Endothelial cell of umbilical vein (primary cell): ENCODE measurements at regions of chr18 and their contacts with region 1.

Region 1: GRCh38 chr18:31722369-31722957 is 38.1 kb upstream of the B4GALT6 start:
- DNase-seq: peak; percentile 80
- H3K4me3 ChIP-seq: no peak overlapping the region
- H3K27ac ChIP-seq: no peak overlapping the region
- H3K4me1 ChIP-seq: peaks cover 2% of the 10 kb centered on the region
- H3K27me3 ChIP-seq: peaks cover 18 to 19% of the 10 kb centered on the region in 2 experiments
- CTCF ChIP-seq: peak; percentile 84 to 87
- POLR2A ChIP-seq: no peak

Region 2: GRCh38 chr18:31610286-31611205 is 111.9 kb before region 1 on chr18:
- CTCF ChIA-PET with region 1: interaction called, 46 read pairs
- POLR2A ChIA-PET with region 1: no interaction called
- dilution Hi-C with region 1: no loop called
- intact Hi-C with region 1: loop called (anchors 1 kb)
- DNase-seq: peak; percentile 26
- H3K4me3 ChIP-seq: no peak overlapping the region
- H3K27ac ChIP-seq: no peak overlapping the region
- H3K4me1 ChIP-seq: no peaks in the 10 kb centered on the region
- H3K27me3 ChIP-seq: peaks cover 7 to 9% of the 10 kb centered on the region in 2 experiments
- CTCF ChIP-seq: peak; percentile 5 to 30
- POLR2A ChIP-seq: no peak

Region 3: DNA sequence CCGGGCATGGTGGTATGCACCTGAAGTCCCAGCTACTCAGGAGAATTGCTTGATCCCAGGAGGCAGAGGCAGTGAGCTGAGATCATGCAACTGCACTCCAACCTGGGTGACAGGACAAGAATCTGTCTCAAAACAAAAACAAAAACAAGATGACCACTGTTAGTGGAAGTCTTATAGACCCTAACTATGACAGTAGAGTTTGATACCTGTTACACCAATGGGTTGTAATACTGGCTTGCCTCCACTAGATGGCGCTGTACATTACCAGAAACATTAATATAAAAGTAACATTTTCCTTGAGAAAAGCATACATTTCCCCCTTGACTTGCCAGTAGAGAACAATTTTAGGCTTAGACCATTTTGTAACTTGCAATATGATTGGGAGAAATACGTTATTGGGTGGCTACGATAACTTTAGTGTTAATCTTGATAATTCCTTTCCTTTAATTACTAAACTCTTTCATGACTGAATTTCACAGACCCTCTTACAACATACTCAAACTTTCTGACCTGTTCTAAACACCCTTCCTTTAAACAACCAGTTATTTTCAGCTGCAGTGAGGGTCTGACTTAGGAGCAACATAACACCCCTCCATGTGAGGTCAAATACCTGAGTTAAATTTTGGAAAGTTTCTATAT is 18.8 kb after region 1 on chr18:
- CTCF ChIA-PET with region 1: interaction called, 11 read pairs
- POLR2A ChIA-PET with region 1: no interaction called
- dilution Hi-C with region 1: no loop called
- intact Hi-C with region 1: no loop called
- DNase-seq: peak; percentile 44
- H3K4me3 ChIP-seq: no peak overlapping the region
- H3K27ac ChIP-seq: no peak overlapping the region
- H3K4me1 ChIP-seq: no peaks in the 10 kb centered on the region
- H3K27me3 ChIP-seq: no peaks in the 10 kb centered on the region
- CTCF ChIP-seq: peak; percentile 60 to 66
- POLR2A ChIP-seq: no peak

Region 4: DNA sequence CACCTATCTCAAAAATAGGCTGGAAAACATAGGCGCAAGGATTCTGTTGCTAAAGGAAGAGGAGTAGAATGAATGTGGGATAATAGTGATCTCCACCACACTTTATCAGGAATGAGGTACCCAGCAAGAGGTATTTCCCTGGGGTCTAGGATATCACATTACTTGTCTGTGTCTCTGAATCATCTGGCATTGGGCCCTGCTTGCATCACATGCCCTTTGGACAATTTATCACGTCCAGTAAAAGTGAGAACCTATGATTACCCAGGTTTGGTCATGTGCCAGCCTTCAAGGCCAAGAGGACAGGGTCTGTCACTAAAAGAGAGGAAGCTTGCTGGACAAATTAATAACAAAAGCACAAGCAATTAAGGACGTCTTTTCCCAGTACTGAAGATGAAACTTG is 231.9 kb after region 1 on chr18:
- CTCF ChIA-PET with region 1: no interaction called
- POLR2A ChIA-PET with region 1: no interaction called
- dilution Hi-C with region 1: no loop called
- intact Hi-C with region 1: loop called (anchors 5 kb)
- DNase-seq: no peak
- H3K4me3 ChIP-seq: no peak overlapping the region
- H3K27ac ChIP-seq: no peak overlapping the region
- H3K4me1 ChIP-seq: no peaks in the 10 kb centered on the region
- H3K27me3 ChIP-seq: no peaks in the 10 kb centered on the region
- CTCF ChIP-seq: no peak
- POLR2A ChIP-seq: no peak

Region 5: DNA sequence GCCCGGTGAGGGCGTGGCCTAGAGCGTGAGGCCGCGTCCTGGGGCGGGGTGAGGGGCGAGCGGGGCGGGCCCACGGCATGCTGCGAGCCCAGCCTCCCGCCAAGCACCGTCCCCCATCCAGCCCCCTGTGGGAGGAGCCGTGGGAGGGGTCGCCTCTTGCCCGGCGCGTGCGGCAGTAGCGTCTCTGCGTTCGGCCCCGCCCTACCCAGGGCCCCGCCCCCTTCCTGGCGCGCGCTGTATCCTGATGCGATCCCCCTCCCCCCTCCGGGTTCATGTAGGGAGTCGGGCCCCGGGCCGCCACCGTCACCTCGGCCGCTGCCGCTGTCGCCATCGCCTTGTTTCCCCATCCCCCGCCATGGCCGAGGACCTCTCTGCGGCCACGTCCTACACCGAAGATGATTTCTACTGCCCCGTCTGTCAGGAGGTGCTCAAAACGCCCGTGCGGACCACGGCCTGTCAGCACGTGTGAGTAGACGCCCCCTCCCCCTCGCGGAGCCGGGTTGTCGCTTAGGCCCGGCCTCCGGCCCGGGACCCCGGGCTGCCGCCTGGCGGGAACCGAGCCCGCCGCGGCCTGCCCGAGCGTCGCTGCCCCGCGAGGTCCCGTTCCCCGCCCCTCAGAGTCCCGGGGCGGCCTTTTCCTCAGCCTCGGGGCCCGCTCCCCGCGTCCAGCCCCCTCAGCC is 370.1 kb after region 1 on chr18:
- CTCF ChIA-PET with region 1: no interaction called
- POLR2A ChIA-PET with region 1: no interaction called
- dilution Hi-C with region 1: no loop called
- intact Hi-C with region 1: no loop called
- DNase-seq: peak; percentile 98
- H3K4me3 ChIP-seq: peak overlapping the region; percentile 30 to 88 (median 81)
- H3K27ac ChIP-seq: peak overlapping the region; percentile 95
- H3K4me1 ChIP-seq: peaks cover 12% of the 10 kb centered on the region
- H3K27me3 ChIP-seq: no peaks in the 10 kb centered on the region
- CTCF ChIP-seq: no peak
- POLR2A ChIP-seq: peak; percentile 73